Mammary epithelial cell (primary cell): ENCODE measurements at regions of chr11 and their contacts with region 1.

Region 1: DNA sequence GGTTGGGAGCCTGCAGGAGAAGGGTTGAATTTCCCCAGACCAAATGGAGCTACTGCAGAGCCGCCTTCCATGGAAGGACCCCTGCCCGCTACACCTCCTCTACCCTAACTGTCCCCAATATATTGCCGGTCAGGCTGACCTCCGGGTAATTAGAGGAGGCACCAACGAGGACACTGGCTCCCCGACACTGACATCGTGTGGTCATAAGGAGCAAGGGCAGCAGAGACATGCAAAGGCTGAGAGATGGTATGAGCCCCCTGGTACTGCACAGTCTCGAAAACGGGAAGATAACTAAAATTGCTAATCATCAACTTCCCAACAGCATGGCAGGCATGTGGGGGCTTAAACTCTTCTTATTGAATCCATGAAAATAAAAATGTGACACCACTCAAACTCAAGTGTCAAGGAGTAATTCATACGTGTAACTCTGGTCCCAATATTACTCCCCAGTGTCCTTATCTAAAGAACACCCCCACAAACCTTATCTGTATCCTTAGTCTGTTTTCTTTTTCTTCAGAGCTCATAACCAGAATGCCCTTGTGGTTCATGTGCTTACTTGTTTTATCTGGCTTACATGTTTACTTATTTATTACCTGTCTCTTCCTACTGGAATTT is 4.4 kb downstream of the CAVIN3 start:
- DNase-seq: peak; percentile 40
- H3K4me3 ChIP-seq: no peak overlapping the region
- H3K27ac ChIP-seq: no peak overlapping the region
- H3K4me1 ChIP-seq: peaks cover 22% of the 10 kb centered on the region
- H3K27me3 ChIP-seq: no peaks in the 10 kb centered on the region
- CTCF ChIP-seq: peak; percentile 93 to 96

Region 2: DNA sequence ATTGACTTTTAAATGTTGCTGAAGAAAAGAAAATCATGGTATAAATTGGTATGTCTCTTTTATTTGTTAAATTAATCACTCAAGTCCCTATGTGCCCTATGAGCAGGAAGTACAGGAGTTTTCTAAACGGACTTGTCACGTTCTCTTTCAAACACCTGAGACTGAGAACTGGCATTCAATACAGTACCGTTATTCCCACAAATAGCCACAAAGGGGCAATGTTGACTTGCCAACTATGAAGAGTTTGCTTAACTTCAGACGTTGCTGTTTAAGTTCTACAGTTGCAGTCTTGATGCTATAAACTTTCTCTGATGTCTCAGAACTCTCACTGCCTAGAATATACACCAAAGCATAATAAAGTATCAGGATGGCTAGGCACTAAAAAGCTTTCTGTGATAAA is 293.0 kb before region 1 on chr11:
- CTCF ChIA-PET with region 1: no interaction called
- dilution Hi-C with region 1: no loop called
- in situ Hi-C with region 1: no loop called
- intact Hi-C with region 1: loop called (anchors 1 kb)
- DNase-seq: peak; percentile 40
- H3K4me3 ChIP-seq: no peak overlapping the region
- H3K27ac ChIP-seq: no peak overlapping the region
- H3K4me1 ChIP-seq: no peaks in the 10 kb centered on the region
- H3K27me3 ChIP-seq: no peaks in the 10 kb centered on the region
- CTCF ChIP-seq: peak; percentile 50 to 73

Region 3: DNA sequence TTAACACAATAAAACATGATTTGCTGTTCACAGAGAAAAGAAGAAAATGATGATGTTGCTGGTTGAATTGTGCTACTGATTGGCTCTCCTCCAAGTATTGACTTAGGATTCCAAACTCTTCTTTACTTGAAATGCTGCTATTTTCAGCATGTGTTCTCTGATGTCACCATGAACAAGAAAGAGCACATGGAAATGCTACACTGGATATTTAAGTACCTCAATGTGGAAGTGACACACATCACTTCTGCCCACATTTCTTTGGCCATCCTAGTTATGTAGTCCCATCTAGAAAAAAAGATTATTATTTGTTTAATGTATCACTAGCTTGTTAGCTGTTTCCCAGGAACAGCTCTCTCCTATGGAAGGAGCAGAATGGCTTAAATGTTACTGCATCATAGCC is 173.0 kb before region 1 on chr11:
- CTCF ChIA-PET with region 1: no interaction called
- dilution Hi-C with region 1: no loop called
- in situ Hi-C with region 1: no loop called
- intact Hi-C with region 1: no loop called
- DNase-seq: no peak
- H3K4me3 ChIP-seq: no peak overlapping the region
- H3K27ac ChIP-seq: no peak overlapping the region
- H3K4me1 ChIP-seq: no peaks in the 10 kb centered on the region
- H3K27me3 ChIP-seq: no peaks in the 10 kb centered on the region
- CTCF ChIP-seq: no peak

Region 4: GRCh38 chr11:6203327-6203726 is 112.6 kb before region 1 on chr11:
- CTCF ChIA-PET with region 1: no interaction called
- dilution Hi-C with region 1: no loop called
- in situ Hi-C with region 1: no loop called
- intact Hi-C with region 1: no loop called
- DNase-seq: peak; percentile 30
- H3K4me3 ChIP-seq: no peak overlapping the region
- H3K27ac ChIP-seq: no peak overlapping the region
- H3K4me1 ChIP-seq: peaks cover 4% of the 10 kb centered on the region
- H3K27me3 ChIP-seq: no peaks in the 10 kb centered on the region
- CTCF ChIP-seq: no peak

Region 5: DNA sequence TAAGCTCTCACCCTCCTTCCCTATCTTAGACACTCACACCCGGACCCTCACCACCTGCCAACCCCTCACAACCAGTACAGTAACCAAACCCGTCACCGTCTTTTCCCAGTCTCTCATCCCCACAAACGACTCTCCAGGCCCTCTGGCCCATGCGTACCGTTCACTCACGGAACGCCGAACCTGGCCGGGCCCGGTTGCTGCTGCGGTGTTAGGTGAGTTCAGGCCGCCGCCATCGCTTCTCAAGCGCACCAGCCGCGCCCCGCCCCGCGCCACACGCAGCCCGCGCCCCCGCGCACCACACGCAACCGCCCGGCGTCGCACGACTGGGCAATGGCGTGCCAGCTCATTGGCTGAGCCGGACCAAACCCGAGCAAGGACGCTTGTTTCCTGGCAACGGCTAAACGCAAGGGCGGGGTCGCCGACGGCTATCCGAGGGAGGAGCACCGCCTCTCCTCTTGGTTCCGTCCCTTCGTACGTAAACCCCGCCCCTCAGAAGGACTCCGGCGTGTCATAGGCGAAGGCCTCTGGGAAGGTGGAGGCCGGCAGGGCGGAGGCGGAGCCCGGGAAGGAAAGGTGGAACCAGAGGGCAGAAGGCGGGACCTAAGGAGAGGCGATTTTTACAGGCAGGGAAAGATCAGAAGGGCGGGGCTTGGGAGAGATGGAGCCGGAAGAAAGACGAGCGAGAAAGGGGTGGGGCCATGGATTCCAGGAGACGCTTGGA is 81.4 kb before region 1 on chr11 and contains the start of gene FHIP1B:
- CTCF ChIA-PET with region 1: no interaction called
- dilution Hi-C with region 1: no loop called
- in situ Hi-C with region 1: no loop called
- intact Hi-C with region 1: loop called (anchors 1 kb)
- DNase-seq: peak; percentile 100
- H3K4me3 ChIP-seq: peak within 1 kb of the TSS; percentile 86 to 98 (median 89)
- H3K27ac ChIP-seq: peak within 1 kb of the TSS; percentile 94
- H3K4me1 ChIP-seq: peaks cover 3% of the 10 kb centered on the region
- H3K27me3 ChIP-seq: no peaks in the 10 kb centered on the region
- CTCF ChIP-seq: no peak
- total RNA-seq, gene FHIP1B: 24.4 to 29.7 TPM

Region 6: GRCh38 chr11:6251120-6251733 is 64.7 kb before region 1 on chr11:
- CTCF ChIA-PET with region 1: no interaction called
- dilution Hi-C with region 1: no loop called
- in situ Hi-C with region 1: loop called in 1 of 2 experiments (anchors 10 kb)
- intact Hi-C with region 1: loop called (anchors 1 kb)
- DNase-seq: peak; percentile 56
- H3K4me3 ChIP-seq: no peak overlapping the region
- H3K27ac ChIP-seq: no peak overlapping the region
- H3K4me1 ChIP-seq: no peaks in the 10 kb centered on the region
- H3K27me3 ChIP-seq: no peaks in the 10 kb centered on the region
- CTCF ChIP-seq: peak; percentile 92 to 94

Region 7: DNA sequence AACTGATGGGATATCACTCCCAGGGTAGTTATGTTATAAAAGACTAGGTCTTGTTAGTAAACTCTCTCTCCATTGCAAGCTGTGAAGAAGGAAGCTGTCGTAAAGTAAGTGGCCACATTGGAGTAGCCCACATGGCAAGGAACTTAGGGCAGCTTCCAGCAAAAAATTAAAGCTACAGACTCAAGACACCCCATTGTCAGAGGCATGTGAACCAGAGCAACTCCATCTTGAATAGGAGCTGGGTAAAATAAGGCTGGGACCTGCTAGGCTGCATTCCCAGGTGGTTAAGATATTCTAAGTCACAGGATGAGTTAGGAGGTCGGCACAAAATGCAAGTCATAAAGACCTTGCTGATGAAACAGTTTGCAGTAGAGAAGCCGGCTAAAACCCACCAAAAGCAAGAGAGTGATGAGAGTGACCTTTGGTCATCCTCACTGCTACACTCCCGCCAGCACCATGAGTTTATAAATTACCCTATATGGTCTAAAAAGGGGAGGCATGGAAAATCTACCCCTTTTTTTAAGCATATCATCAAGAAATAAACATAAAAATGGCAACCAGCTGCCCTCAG is 32.4 kb before region 1 on chr11:
- CTCF ChIA-PET with region 1: no interaction called
- dilution Hi-C with region 1: no loop called
- in situ Hi-C with region 1: no loop called
- intact Hi-C with region 1: loop called (anchors 5 kb)
- DNase-seq: no peak
- H3K4me3 ChIP-seq: no peak overlapping the region
- H3K27ac ChIP-seq: no peak overlapping the region
- H3K4me1 ChIP-seq: peaks cover 10% of the 10 kb centered on the region
- H3K27me3 ChIP-seq: no peaks in the 10 kb centered on the region
- CTCF ChIP-seq: no peak